ENCODE measurements at regions of chr4 and their contacts with region 1.

Region 1: GRCh38 chr4:26826721-26827120 is 33.9 kb upstream of the STIM2 start:
- DNase-seq: peak; percentile 47
- ATAC-seq: peak; percentile 84
- H3K4me3 Mint-ChIP-seq: peak overlapping the region; percentile 59
- H3K27ac Mint-ChIP-seq: peak overlapping the region; percentile 88
- H3K4me1 Mint-ChIP-seq: peaks cover 92% of the 10 kb centered on the region
- H3K27me3 Mint-ChIP-seq: peaks cover 9% of the 10 kb centered on the region
- CTCF ChIP-seq: no peak

Region 2: DNA sequence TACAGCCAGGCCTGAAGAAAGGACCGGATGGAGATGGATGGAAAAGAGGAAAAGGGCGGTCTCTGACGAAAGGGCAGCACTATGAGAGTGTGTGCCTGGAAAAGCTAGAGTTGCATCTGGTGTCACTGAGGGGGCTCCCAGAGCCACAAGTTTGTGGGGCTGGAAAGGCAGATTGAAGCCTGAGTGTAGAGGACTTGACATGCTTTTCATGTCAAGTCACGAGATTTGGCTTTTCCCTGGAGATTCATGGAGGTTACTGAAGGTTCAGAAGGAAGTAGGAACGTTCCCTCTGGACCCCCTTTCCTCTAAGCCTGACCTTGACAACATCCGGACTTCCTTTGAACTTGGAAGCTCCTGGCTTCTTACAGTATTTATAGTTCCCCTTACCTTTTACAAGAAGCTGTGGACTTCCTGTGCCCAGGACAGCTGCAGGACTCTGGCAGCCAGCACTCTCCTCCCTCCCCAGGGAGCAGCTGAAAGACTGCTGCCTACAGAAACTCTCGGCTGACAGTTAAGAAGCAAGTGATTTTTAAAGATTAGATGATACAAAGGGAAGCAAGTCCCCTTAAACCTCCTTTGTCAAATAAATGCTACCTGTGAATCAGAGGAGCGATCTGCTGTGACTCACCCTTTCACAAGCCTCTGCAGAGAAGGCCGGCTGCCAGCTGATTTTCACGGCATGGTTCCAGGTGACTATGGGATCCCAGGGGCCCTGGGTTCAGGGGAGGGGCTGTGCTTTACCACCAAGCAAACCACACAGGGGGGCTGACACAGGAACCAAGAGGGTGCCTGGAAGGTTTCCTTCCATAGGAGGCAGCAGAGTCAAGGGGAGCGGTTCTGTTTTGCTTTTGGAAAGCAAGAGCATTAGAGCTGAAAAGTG is 39.0 kb before region 1 on chr4:
- CTCF ChIA-PET with region 1: no interaction called
- POLR2A ChIA-PET with region 1: interaction called, 3 read pairs
- intact Hi-C with region 1: loop called (anchors 1 kb)
- DNase-seq: no peak
- ATAC-seq: peak; percentile 63
- H3K4me3 Mint-ChIP-seq: peak overlapping the region; percentile 13
- H3K27ac Mint-ChIP-seq: peak overlapping the region; percentile 32
- H3K4me1 Mint-ChIP-seq: peaks cover 37% of the 10 kb centered on the region
- H3K27me3 Mint-ChIP-seq: peaks cover 2% of the 10 kb centered on the region
- CTCF ChIP-seq: no peak

Region 3: DNA sequence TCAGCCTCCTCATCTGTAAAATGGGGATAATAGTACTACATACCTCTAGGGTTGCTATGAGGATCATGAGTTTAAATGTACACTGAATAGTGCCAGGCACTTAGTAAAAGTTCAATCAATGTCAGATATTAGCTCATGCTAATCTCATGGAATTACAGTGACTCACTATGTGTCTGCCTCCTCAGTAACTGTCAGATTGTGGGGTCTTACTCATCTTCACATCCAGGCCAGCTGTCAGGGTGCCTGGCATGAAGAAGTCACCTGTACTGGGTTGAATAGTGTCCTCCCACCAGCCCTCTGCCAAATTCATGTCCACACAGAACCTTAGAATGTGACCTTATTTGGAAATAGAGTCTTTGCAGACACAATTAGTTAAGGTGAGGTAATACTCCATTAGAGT is 20.4 kb before region 1 on chr4:
- CTCF ChIA-PET with region 1: no interaction called
- POLR2A ChIA-PET with region 1: no interaction called
- intact Hi-C with region 1: loop called (anchors 1 kb)
- DNase-seq: no peak
- ATAC-seq: no peak
- H3K4me3 Mint-ChIP-seq: no peak overlapping the region
- H3K27ac Mint-ChIP-seq: no peak overlapping the region
- H3K4me1 Mint-ChIP-seq: peaks cover 33% of the 10 kb centered on the region
- H3K27me3 Mint-ChIP-seq: peaks cover 16% of the 10 kb centered on the region
- CTCF ChIP-seq: no peak

Region 4: GRCh38 chr4:26992657-26993361 is 166.1 kb after region 1 on chr4:
- CTCF ChIA-PET with region 1: no interaction called
- POLR2A ChIA-PET with region 1: interaction called, 4 read pairs
- intact Hi-C with region 1: loop called (anchors 1 kb)
- DNase-seq: peak; percentile 26
- ATAC-seq: peak; percentile 80
- H3K4me3 Mint-ChIP-seq: no peak overlapping the region
- H3K27ac Mint-ChIP-seq: no peak overlapping the region
- H3K4me1 Mint-ChIP-seq: peaks cover 17% of the 10 kb centered on the region
- H3K27me3 Mint-ChIP-seq: no peaks in the 10 kb centered on the region
- CTCF ChIP-seq: no peak

Region 5: DNA sequence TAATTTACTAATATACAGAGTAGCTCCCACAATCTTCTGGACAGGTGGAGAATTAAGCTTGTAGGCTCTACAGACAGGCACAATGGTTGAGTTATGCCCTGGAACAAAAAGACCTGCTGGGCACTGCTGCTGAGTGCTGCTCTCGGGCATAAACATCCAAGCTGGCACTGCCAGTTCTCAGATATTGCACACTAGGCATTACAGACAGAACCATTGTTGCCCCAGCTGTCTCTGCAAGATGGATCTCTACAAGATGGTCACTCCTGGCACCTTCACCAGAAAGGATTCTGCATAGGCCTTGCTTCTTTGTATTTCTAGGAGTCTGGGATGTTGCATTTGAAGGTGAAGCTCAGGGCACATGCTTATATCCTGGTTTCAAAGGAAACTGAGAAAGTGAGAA is 561.0 kb after region 1 on chr4:
- CTCF ChIA-PET with region 1: no interaction called
- POLR2A ChIA-PET with region 1: no interaction called
- intact Hi-C with region 1: no loop called
- DNase-seq: no peak
- ATAC-seq: no peak
- H3K4me3 Mint-ChIP-seq: no peak overlapping the region
- H3K27ac Mint-ChIP-seq: no peak overlapping the region
- H3K4me1 Mint-ChIP-seq: no peaks in the 10 kb centered on the region
- H3K27me3 Mint-ChIP-seq: no peaks in the 10 kb centered on the region
- CTCF ChIP-seq: no peak

Region 6: GRCh38 chr4:27490315-27490714 is 663.6 kb after region 1 on chr4:
- CTCF ChIA-PET with region 1: no interaction called
- POLR2A ChIA-PET with region 1: no interaction called
- intact Hi-C with region 1: no loop called
- DNase-seq: no peak
- ATAC-seq: no peak
- H3K4me3 Mint-ChIP-seq: no peak overlapping the region
- H3K27ac Mint-ChIP-seq: no peak overlapping the region
- H3K4me1 Mint-ChIP-seq: no peaks in the 10 kb centered on the region
- H3K27me3 Mint-ChIP-seq: no peaks in the 10 kb centered on the region
- CTCF ChIP-seq: no peak

Measured in activated B cell treated with CpG ODN at 0.5 μM for 24 hours (primary cell).